ENCODE measurements at regions of chr1 and their contacts with region 1.

Region 1: GRCh38 chr1:22930235-22930912 is 42.3 kb downstream of the LACTBL1 start:
- DNase-seq: peak; percentile 64
- ATAC-seq: peak; percentile 84
- H3K4me3 ChIP-seq: no peak overlapping the region
- H3K27ac ChIP-seq: no peak overlapping the region
- H3K4me1 ChIP-seq: no peaks in the 10 kb centered on the region
- H3K27me3 ChIP-seq: no peaks in the 10 kb centered on the region
- CTCF ChIP-seq: peak; percentile 86

Region 2: GRCh38 chr1:22665752-22666151 is 264.6 kb before region 1 on chr1:
- CTCF ChIA-PET with region 1: no interaction called
- POLR2A ChIA-PET with region 1: no interaction called
- intact Hi-C with region 1: loop called (anchors 2 kb)
- DNase-seq: peak; percentile 42
- ATAC-seq: peak; percentile 55; the same call in 1 of the 2 replicates
- H3K4me3 ChIP-seq: no peak overlapping the region
- H3K27ac ChIP-seq: no peak overlapping the region
- H3K4me1 ChIP-seq: no peaks in the 10 kb centered on the region
- H3K27me3 ChIP-seq: peaks cover 16% of the 10 kb centered on the region
- CTCF ChIP-seq: peak; percentile 77

Region 3: DNA sequence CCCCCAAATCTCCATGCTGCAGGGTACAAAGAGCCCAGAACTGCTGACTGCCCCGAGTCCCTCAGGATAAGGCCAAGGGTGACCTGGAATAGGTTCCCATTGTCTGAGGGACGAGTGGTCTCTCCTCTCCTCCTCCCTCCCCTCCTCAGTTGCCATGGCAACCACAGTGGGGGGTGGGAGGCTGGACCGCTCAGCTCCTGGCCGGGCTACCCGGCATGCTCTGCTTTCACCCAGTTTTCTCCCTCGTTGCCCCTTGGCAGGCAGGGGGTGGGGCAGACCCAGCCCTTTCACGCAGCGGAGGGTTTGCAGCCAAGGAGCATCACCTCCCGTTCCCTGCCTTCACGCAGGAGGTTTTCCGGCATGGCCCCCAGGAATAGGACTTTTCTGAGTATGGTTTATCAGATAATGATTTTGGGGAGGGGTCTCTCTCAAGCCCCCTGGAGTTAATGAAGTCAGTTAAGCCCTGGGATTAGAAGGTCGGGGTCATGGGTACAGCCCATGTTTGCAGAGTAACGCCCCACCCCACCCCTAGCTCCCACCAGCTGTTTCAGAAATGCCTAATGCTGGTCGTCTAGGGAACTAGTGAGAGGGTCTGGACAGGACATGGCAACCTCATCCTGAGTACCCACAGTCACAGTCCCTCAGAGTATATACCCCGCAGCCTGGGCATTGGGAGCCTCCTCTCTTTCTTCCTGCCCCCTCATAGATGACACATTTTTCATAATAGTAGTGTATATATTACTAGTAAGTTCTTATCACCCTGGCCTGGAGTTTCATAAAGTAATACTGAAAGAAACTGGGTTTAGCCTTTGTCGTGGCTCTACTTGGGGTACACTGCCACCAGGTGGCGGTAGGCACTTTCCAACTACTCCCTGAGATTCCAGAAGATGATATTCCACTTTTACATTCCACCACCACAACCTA is 256.6 kb before region 1 on chr1:
- CTCF ChIA-PET with region 1: interaction called, 20 read pairs
- POLR2A ChIA-PET with region 1: no interaction called
- intact Hi-C with region 1: loop called (anchors 1 kb)
- DNase-seq: peak; percentile 74
- ATAC-seq: peak; percentile 76
- H3K4me3 ChIP-seq: no peak overlapping the region
- H3K27ac ChIP-seq: no peak overlapping the region
- H3K4me1 ChIP-seq: no peaks in the 10 kb centered on the region
- H3K27me3 ChIP-seq: no peaks in the 10 kb centered on the region
- CTCF ChIP-seq: peak; percentile 88

Region 4: GRCh38 chr1:22794647-22795365 is 135.6 kb before region 1 on chr1:
- CTCF ChIA-PET with region 1: no interaction called
- POLR2A ChIA-PET with region 1: no interaction called
- intact Hi-C with region 1: no loop called
- DNase-seq: no peak
- ATAC-seq: no peak
- H3K4me3 ChIP-seq: no peak overlapping the region
- H3K27ac ChIP-seq: no peak overlapping the region
- H3K4me1 ChIP-seq: no peaks in the 10 kb centered on the region
- H3K27me3 ChIP-seq: no peaks in the 10 kb centered on the region
- CTCF ChIP-seq: no peak

Region 5: DNA sequence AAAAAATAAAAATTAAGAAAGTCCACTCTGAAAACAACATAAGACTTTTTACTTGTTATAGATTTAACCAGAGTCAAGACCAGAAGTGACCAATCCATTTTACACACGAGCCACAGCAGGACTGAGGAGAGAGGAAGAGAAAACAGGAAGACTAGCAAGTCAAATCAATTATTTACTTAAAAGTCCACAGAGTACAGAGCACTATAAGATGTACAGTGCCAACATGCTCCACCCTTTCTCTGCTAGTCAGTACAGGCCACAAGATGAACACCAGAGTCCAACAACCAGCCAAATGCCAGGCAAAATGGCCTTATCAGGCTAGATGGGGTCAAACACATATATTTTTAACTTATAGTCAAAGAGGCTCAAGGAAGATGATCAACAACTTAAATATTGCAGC is 218.7 kb after region 1 on chr1:
- CTCF ChIA-PET with region 1: no interaction called
- POLR2A ChIA-PET with region 1: no interaction called
- intact Hi-C with region 1: no loop called
- DNase-seq: peak; percentile 20
- ATAC-seq: peak; percentile 99
- H3K4me3 ChIP-seq: no peak overlapping the region
- H3K27ac ChIP-seq: no peak overlapping the region
- H3K4me1 ChIP-seq: peaks cover 5% of the 10 kb centered on the region
- H3K27me3 ChIP-seq: no peaks in the 10 kb centered on the region
- CTCF ChIP-seq: no peak

Region 6: GRCh38 chr1:23756676-23757075 is 826.3 kb after region 1 on chr1:
- CTCF ChIA-PET with region 1: no interaction called
- POLR2A ChIA-PET with region 1: no interaction called
- intact Hi-C with region 1: no loop called
- DNase-seq: peak; percentile 32
- ATAC-seq: peak; percentile 86
- H3K4me3 ChIP-seq: no peak overlapping the region
- H3K27ac ChIP-seq: no peak overlapping the region
- H3K4me1 ChIP-seq: no peaks in the 10 kb centered on the region
- H3K27me3 ChIP-seq: no peaks in the 10 kb centered on the region
- CTCF ChIP-seq: no peak

Region 7: GRCh38 chr1:24289937-24290595 is 1359.7 kb after region 1 on chr1:
- CTCF ChIA-PET with region 1: no interaction called
- POLR2A ChIA-PET with region 1: interaction called, 14 read pairs
- intact Hi-C with region 1: no loop called
- DNase-seq: peak; percentile 95
- ATAC-seq: peak; percentile 57
- H3K4me3 ChIP-seq: no peak overlapping the region
- H3K27ac ChIP-seq: peak overlapping the region; percentile 76
- H3K4me1 ChIP-seq: peaks cover 62% of the 10 kb centered on the region
- H3K27me3 ChIP-seq: no peaks in the 10 kb centered on the region
- CTCF ChIP-seq: no peak